Gastrocnemius medialis (tissue), 4 donors: ENCODE measurements at regions of chr19 and their contacts with region 1.

Region 1: GRCh38 chr19:11798391-11799330 is at the start of gene ZNF491:
- DNase-seq: peak; percentile 79 to 86
- ATAC-seq: peak; percentile 92 to 95
- H3K4me3 ChIP-seq: peak within 1 kb of the TSS; percentile 58 to 74 (median 70)
- H3K27ac ChIP-seq: peak within 1 kb of the TSS; percentile 74 to 84 (median 78)
- H3K4me1 ChIP-seq: peaks cover 16 to 17% of the 10 kb centered on the region in 2 donors
- H3K27me3 ChIP-seq: no peaks in the 10 kb centered on the region
- CTCF ChIP-seq: peak in 2 of 5 experiments; percentile 22 to 24
- POLR2A ChIP-seq: peak; percentile 53 to 79
- total RNA-seq, gene ZNF491: 0.92 to 1.8 (median 1.4) TPM

Region 2: GRCh38 chr19:11738746-11739620 is 59.7 kb before region 1 on chr19 and contains the start of gene ZNF823:
- in situ Hi-C with region 1: no loop called
- intact Hi-C with region 1: no loop called
- DNase-seq: peak; percentile 96 to 97
- ATAC-seq: peak; percentile 99
- H3K4me3 ChIP-seq: peak within 1 kb of the TSS; percentile 82 to 96 (median 87)
- H3K27ac ChIP-seq: peak within 1 kb of the TSS; percentile 77 to 88 (median 82)
- H3K4me1 ChIP-seq: peaks cover 8 to 14% of the 10 kb centered on the region in 2 donors
- H3K27me3 ChIP-seq: no peaks in the 10 kb centered on the region
- CTCF ChIP-seq: no peak
- POLR2A ChIP-seq: peak; percentile 46 to 59
- total RNA-seq, gene ZNF823: 1.4 to 4.1 (median 2.6) TPM

Region 3: GRCh38 chr19:11766597-11767591 is 31.8 kb before region 1 on chr19 and contains the start of gene ZNF441:
- in situ Hi-C with region 1: no loop called
- intact Hi-C with region 1: loop called (anchors 2 kb)
- DNase-seq: peak; percentile 95
- ATAC-seq: peak; percentile 97 to 98
- H3K4me3 ChIP-seq: peak within 1 kb of the TSS; percentile 71 to 86 (median 82)
- H3K27ac ChIP-seq: peak within 1 kb of the TSS; percentile 85 to 89 (median 86)
- H3K4me1 ChIP-seq: peaks cover 9 to 14% of the 10 kb centered on the region in 2 donors
- H3K27me3 ChIP-seq: no peaks in the 10 kb centered on the region
- CTCF ChIP-seq: no peak
- POLR2A ChIP-seq: peak; percentile 57 to 66
- total RNA-seq, gene ZNF441: 1.1 to 7.6 (median 2.9) TPM

Region 4: GRCh38 chr19:11848594-11849469 is 50.2 kb after region 1 on chr19 and contains the start of gene ZNF439:
- in situ Hi-C with region 1: no loop called
- intact Hi-C with region 1: loop called (anchors 2 kb)
- DNase-seq: peak; percentile 57 to 58
- ATAC-seq: peak; percentile 54 to 60
- H3K4me3 ChIP-seq: peak within 1 kb of the TSS; percentile 51 to 64 (median 59)
- H3K27ac ChIP-seq: peak within 1 kb of the TSS in 2 of 4 donors; percentile 15 to 25
- H3K4me1 ChIP-seq: peaks cover 0 to 5% of the 10 kb centered on the region in 2 donors
- H3K27me3 ChIP-seq: peaks cover 0 to 17% (median 10%) of the 10 kb centered on the region in 3 donors
- CTCF ChIP-seq: no peak
- POLR2A ChIP-seq: no peak
- total RNA-seq, gene ZNF439: 0.42 to 0.68 (median 0.46) TPM in 3 of 4 donors, not detected in the other

Region 5: GRCh38 chr19:11861301-11861700 is 62.6 kb after region 1 on chr19:
- in situ Hi-C with region 1: no loop called
- intact Hi-C with region 1: no loop called
- DNase-seq: no peak
- ATAC-seq: no peak
- H3K4me3 ChIP-seq: no peak overlapping the region
- H3K27ac ChIP-seq: no peak overlapping the region
- H3K4me1 ChIP-seq: no peaks in the 10 kb centered on the region
- H3K27me3 ChIP-seq: no peaks in the 10 kb centered on the region
- CTCF ChIP-seq: no peak
- POLR2A ChIP-seq: no peak

Region 6: GRCh38 chr19:11924886-11925650 is 126.4 kb after region 1 on chr19 and contains the start of gene ZNF700:
- in situ Hi-C with region 1: no loop called
- intact Hi-C with region 1: loop called (anchors 1 kb)
- DNase-seq: peak; percentile 92
- ATAC-seq: peak; percentile 98 to 99
- H3K4me3 ChIP-seq: peak within 1 kb of the TSS; percentile 88 to 98 (median 88)
- H3K27ac ChIP-seq: peak within 1 kb of the TSS; percentile 89 to 94 (median 92)
- H3K4me1 ChIP-seq: peaks cover 4 to 20% of the 10 kb centered on the region in 2 donors
- H3K27me3 ChIP-seq: no peaks in the 10 kb centered on the region
- CTCF ChIP-seq: no peak
- POLR2A ChIP-seq: peak; percentile 64 to 77
- total RNA-seq, gene ZNF700: 1.3 to 5.8 (median 4.0) TPM

Region 7: GRCh38 chr19:11995174-11995573 is 196.5 kb after region 1 on chr19:
- in situ Hi-C with region 1: loop called in 1 of 4 experiments (anchors 10 kb)
- intact Hi-C with region 1: no loop called
- DNase-seq: no peak
- ATAC-seq: no peak
- H3K4me3 ChIP-seq: no peak overlapping the region
- H3K27ac ChIP-seq: no peak overlapping the region
- H3K4me1 ChIP-seq: no peaks in the 10 kb centered on the region
- H3K27me3 ChIP-seq: no peaks in the 10 kb centered on the region
- CTCF ChIP-seq: no peak
- POLR2A ChIP-seq: no peak

Region 8: DNA sequence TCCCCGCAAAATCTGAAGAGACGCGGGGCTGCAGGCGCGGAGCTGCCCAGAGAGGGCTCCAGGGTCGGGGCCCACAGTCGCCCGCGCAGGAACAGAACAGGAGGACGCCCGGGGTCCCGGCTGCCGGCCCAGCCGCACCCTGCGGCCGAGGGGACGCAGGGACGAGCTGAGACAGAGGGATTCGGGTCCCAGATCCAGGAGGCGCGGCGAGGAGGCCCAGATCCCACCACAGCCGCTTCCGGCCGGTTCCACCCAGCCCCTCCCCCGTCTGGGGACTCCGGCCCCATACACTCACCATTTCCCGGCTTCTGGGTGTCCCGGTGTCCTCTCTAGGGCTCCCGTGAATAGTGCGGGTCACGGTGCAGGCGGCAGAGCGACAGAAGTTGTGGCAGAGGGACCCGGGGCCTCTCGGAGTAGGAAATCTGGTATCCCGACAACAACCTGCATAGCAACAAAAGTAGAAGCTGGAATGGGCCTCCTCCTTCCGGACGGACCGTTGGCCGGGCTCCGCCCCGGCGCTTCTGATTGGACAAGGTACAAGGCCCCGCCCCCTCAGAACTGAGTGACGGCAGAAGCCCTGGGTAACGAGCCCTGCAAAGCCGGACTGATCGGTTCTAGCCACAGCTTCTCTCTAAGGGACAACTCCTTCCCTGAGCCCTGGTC is 341.4 kb after region 1 on chr19 and contains the start of gene ZNF20:
- in situ Hi-C with region 1: loop called in 3 of 4 experiments (anchors 5 to 10 kb)
- intact Hi-C with region 1: loop called (anchors 1 kb)
- DNase-seq: peak; percentile 88 to 91
- ATAC-seq: peak; percentile 97 to 98
- H3K4me3 ChIP-seq: peak within 1 kb of the TSS; percentile 84 to 96 (median 90)
- H3K27ac ChIP-seq: peak within 1 kb of the TSS; percentile 74 to 81 (median 78)
- H3K4me1 ChIP-seq: peaks cover 4 to 16% of the 10 kb centered on the region in 2 donors
- H3K27me3 ChIP-seq: no peaks in the 10 kb centered on the region
- CTCF ChIP-seq: peak in 1 of 5 experiments; percentile 7
- POLR2A ChIP-seq: peak in 1 of 2 donors; percentile 26
- total RNA-seq, gene ZNF20: 0.29 to 0.78 (median 0.41) TPM in 3 of 4 donors, not detected in the other

Region 9: DNA sequence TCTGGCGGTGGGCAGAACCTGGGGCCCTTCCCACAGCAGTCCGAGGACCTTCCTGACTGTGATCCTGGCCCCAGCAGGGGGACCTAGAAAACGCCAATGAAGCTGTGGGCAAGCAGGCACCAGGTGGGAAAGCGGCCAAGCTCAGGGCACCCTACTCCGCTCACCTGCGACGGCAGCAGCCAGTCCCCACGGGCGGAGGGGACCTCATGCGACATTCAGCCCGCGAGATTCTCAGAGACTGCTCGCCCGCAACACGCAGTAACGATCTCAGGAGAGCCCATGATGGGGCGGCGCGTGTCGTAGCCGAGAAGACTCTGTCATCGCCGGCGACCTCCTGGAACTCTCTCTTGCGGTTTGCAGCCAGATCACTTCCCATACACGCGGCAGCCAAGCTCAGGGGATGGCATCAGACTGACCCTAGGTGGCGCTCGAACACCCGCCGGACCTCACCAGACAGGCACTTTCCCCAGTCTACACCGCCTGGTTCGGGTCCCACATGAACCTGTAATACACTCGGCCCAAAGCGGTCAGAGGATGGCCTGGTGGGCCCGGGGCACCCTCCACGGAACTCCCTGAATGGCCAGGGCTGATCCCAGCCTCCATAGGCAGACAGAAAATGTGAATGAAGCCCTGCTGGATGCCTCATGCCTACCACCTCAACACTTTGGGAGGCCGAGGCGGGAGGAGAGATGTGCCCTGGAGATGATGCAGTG is 841.4 kb after region 1 on chr19:
- in situ Hi-C with region 1: no loop called
- intact Hi-C with region 1: no loop called
- DNase-seq: peak; percentile 32 to 63
- ATAC-seq: peak in 1 of 2 donors; percentile 76
- H3K4me3 ChIP-seq: peak overlapping the region; percentile 14 to 32 (median 26)
- H3K27ac ChIP-seq: no peak overlapping the region
- H3K4me1 ChIP-seq: peaks cover 2 to 5% of the 10 kb centered on the region in 2 donors
- H3K27me3 ChIP-seq: no peaks in the 10 kb centered on the region
- CTCF ChIP-seq: peak; percentile 27 to 74 (median 46)
- POLR2A ChIP-seq: no peak